Breast epithelium (tissue), 4 donors: ENCODE measurements at regions of chr4 and their contacts with region 1.

Region 1: DNA sequence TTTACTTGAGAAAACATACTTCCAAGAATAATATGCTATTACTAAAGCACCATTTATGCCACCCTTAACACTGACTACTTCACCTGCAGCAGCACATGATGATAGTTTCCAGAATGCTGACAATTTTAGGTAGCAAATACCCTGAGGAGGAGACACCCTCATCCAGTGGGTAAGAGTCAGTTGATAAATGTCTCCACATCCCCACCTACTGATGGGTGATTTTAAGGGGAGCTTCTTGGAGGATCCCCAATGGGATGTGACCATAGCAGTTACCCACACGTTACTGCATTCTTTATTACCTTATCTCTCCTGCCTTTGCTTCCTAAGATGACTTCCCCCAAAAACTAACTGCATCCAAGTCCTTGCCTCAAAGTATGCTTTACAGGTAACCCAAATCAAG is 131.2 kb upstream of the SMARCAD1 start:
- DNase-seq: no peak
- H3K4me3 ChIP-seq: no peak overlapping the region
- H3K27ac ChIP-seq: no peak overlapping the region
- H3K4me1 ChIP-seq: no peaks in the 10 kb centered on the region
- H3K27me3 ChIP-seq: no peaks in the 10 kb centered on the region
- CTCF ChIP-seq: no peak
- POLR2A ChIP-seq: no peak

Region 2: DNA sequence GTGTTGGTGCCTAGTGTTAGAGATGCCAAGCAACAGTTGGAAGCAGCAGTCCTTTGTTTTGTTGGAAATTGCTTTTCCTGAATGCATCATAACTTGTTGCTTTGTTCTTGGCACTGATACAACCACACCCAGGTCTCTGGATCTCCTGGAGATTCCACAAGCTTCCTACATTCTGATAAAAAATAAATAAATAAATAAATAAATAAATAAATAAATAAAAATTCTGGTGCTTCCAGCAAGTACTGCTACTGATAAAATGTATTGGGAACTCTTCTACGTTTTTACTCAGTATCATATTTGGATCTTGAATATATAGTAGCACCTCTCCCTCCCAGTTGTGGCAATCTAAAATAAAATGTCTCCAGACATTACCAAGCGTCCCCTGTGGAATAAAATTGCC is 1835.4 kb before region 1 on chr4:
- intact Hi-C with region 1: loop called (anchors 10 kb)
- DNase-seq: no peak
- H3K4me3 ChIP-seq: no peak overlapping the region
- H3K27ac ChIP-seq: no peak overlapping the region
- H3K4me1 ChIP-seq: no peaks in the 10 kb centered on the region
- H3K27me3 ChIP-seq: no peaks in the 10 kb centered on the region
- CTCF ChIP-seq: no peak
- POLR2A ChIP-seq: no peak